ENCODE measurements at regions of chr6 and their contacts with region 1.

Region 1: DNA sequence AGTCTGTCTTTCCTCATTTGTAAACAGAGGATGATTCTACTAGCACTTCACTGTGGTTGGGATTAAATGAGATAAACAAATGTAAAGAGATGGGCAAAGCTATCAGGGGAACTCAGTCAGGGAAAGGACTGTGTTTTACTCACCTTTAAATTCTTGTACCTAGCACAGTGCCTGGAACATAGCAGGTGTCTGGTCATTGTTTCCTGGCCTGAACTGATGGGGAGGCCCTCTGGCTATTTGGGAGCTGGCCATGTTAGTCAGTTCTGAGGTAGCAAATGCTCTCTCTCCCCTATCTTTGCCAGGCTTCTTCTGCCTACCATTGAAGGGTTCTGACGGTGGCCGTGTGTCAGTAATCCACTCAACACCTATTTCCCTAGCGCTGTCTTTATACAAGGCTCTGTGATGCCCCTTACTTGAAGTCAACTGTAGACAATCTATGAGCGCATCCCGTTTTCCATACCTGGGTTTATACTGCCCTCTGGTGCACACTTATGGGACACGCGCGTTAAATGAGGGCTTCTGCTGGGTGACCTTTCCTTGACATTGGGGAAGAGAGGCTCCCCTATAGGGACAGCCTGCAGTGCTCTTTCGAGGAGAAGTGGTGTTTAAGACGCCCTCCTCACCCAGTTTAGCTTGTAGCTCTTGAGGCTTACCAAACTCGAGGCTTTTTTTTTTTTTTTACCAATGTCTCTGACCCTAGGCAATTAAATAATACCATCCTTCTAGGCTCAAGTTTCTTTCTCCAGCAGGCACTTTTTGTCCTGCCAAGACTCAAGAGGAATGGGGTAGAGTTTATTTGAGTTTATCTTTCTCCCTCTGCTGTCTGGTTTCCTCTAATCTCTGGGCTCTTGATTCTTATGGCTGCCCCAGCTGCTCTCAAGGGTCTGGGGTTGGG is 4.0 kb upstream of the SPATS1 start:
- DNase-seq: peak; percentile 80
- ATAC-seq: peak; percentile 83
- H3K4me3 ChIP-seq: no peak overlapping the region
- H3K4me3 Mint-ChIP-seq: no peak overlapping the region
- H3K27ac ChIP-seq: no peak overlapping the region
- H3K27ac Mint-ChIP-seq: no peak overlapping the region
- H3K4me1 ChIP-seq: peaks cover 0 to 6% of the 10 kb centered on the region in 2 donors
- H3K4me1 Mint-ChIP-seq: no peaks in the 10 kb centered on the region
- H3K27me3 ChIP-seq: peaks cover 0 to 22% (median 19%) of the 10 kb centered on the region in 4 experiments
- H3K27me3 Mint-ChIP-seq: peaks cover 24% of the 10 kb centered on the region
- CTCF ChIP-seq: peak; percentile 82

Region 2: DNA sequence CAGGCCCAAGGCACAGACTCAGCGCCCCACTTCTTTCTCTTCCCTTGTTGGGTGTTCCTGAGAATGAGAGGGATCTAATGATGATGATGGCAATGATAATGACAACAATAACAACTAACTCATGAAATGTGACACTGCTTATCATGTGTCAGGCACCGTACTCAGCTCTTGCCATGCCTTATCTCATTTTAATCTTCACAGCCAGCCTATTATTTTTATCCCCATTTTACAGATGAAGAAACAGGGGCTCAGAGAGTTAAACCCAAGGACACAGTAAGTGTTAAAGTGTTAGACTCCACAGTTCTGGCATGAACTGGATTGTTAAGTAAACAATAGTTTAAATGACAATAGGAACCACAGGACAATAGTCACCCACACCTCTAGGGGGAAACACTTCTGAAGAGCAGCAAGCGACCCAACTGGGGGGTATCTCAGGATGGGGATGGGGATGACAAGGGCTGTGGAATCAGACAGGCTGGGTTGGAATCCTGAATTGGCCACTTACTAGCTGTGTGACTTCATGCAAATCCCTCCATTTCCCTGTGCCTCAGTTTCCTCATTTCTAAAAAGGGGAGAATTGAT is 681.2 kb before region 1 on chr6:
- CTCF ChIA-PET with region 1: no interaction called
- POLR2A ChIA-PET with region 1: interaction called, 11 read pairs
- intact Hi-C with region 1: no loop called
- DNase-seq: no peak
- ATAC-seq: no peak
- H3K4me3 ChIP-seq: no peak overlapping the region
- H3K4me3 Mint-ChIP-seq: no peak overlapping the region
- H3K27ac ChIP-seq: no peak overlapping the region
- H3K27ac Mint-ChIP-seq: no peak overlapping the region
- H3K4me1 ChIP-seq: no peaks in the 10 kb centered on the region
- H3K4me1 Mint-ChIP-seq: no peaks in the 10 kb centered on the region
- H3K27me3 ChIP-seq: no peaks in the 10 kb centered on the region
- H3K27me3 Mint-ChIP-seq: peaks cover 8% of the 10 kb centered on the region
- CTCF ChIP-seq: no peak